ENCODE measurements at regions of chr6 and their contacts with region 1.

Region 1: DNA sequence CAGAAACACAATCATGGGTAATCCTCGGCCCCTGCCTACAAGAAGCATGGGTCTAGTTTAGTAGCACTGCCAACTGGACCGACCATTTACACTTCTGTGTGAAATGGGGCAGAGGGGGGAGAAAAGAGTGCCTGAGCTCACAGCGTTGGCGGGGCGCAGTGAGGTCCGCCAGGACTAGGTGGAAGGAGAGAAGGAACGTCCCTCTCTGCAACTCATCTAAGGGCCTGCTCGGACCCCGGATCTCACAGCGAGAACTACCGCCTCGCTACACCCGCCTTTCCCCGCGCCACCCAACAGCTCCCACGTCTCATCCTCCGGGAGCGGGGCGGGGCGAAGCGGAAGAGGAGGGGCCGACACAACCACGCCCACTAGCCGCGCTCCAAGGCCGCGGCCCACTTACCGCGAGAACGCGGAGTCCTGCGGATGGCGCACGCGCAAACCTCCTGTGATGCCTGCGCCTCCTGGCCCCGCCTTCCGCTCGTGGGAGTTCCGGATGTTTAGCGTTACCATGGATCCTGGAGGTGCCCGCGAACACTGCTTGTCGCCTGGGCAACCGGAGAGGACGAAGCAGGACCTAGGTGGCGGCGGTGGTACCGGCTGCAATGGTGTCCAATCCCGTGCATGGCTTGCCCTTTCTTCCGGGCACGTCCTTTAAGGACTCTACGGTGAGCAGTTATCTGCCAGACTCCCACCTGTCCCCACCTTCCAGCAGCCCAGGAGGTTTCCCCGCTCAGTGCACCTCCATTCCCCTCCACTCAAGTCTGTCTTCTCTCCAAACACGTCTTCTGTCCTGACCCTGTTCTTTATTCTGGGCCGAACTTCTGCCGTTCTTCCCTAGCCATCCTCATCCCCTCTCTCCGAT is at the start of gene EFHC1:
- DNase-seq: peak; percentile 97
- H3K4me3 Mint-ChIP-seq: no peak within 1 kb of the TSS
- H3K27ac Mint-ChIP-seq: no peak within 1 kb of the TSS
- H3K4me1 Mint-ChIP-seq: peaks cover 20% of the 10 kb centered on the region
- H3K27me3 Mint-ChIP-seq: peaks cover 5% of the 10 kb centered on the region
- total RNA-seq, gene EFHC1: 0.67 and 1.6 TPM in 2 replicates

Region 2: GRCh38 chr6:52389264-52389625 is 30.8 kb before region 1 on chr6:
- intact Hi-C with region 1: no loop called
- DNase-seq: no peak
- H3K4me3 Mint-ChIP-seq: peak overlapping the region; percentile 59
- H3K27ac Mint-ChIP-seq: peak overlapping the region; percentile 84
- H3K4me1 Mint-ChIP-seq: peaks cover 75% of the 10 kb centered on the region
- H3K27me3 Mint-ChIP-seq: no peaks in the 10 kb centered on the region

Region 3: DNA sequence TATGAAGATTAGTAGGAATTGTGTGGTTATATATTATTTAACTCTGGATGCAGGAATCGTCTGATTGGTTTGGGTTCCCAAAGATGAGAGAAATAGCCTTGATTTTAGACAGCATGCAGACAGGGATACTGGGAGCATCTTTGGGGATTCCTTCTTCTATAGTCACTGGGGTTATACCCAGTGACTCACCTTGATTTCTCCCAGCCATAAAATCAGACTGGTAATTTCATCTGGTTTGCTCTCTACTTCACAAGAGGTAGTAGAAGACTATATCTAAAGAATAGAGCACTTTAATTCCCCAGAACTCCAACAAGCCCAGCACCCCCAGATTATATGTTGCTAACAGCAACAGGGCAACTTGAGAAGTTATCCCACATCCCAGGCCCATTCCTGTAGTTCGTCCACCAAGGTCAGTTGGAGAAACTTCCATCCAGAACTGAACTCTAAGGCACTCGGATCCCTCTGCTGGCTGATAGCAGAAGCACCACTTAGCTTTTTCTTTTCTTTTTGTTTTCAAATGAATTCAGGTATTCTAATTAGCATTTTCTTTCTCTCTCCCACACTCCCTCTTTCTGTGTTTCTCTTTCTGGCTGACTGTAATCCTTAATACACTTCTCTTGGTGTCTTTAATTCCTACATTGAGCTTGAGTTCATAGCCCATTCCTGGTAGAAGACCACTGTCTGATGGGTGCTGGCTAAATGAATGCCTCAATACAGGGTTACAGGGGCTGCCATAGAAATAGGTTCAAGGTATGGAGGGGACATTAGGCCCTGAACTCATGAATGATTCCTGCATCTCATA is 20.3 kb before region 1 on chr6:
- intact Hi-C with region 1: loop called (anchors 2 kb)
- DNase-seq: no peak
- H3K4me3 Mint-ChIP-seq: no peak overlapping the region
- H3K27ac Mint-ChIP-seq: peak overlapping the region; percentile 44
- H3K4me1 Mint-ChIP-seq: peaks cover 47% of the 10 kb centered on the region
- H3K27me3 Mint-ChIP-seq: no peaks in the 10 kb centered on the region

Region 4: GRCh38 chr6:52537001-52537753 is 117.1 kb after region 1 on chr6:
- intact Hi-C with region 1: loop called (anchors 2 kb)
- DNase-seq: peak; percentile 18
- H3K4me3 Mint-ChIP-seq: no peak overlapping the region
- H3K27ac Mint-ChIP-seq: peak overlapping the region; percentile 19
- H3K4me1 Mint-ChIP-seq: peaks cover 51% of the 10 kb centered on the region
- H3K27me3 Mint-ChIP-seq: no peaks in the 10 kb centered on the region

Region 5: DNA sequence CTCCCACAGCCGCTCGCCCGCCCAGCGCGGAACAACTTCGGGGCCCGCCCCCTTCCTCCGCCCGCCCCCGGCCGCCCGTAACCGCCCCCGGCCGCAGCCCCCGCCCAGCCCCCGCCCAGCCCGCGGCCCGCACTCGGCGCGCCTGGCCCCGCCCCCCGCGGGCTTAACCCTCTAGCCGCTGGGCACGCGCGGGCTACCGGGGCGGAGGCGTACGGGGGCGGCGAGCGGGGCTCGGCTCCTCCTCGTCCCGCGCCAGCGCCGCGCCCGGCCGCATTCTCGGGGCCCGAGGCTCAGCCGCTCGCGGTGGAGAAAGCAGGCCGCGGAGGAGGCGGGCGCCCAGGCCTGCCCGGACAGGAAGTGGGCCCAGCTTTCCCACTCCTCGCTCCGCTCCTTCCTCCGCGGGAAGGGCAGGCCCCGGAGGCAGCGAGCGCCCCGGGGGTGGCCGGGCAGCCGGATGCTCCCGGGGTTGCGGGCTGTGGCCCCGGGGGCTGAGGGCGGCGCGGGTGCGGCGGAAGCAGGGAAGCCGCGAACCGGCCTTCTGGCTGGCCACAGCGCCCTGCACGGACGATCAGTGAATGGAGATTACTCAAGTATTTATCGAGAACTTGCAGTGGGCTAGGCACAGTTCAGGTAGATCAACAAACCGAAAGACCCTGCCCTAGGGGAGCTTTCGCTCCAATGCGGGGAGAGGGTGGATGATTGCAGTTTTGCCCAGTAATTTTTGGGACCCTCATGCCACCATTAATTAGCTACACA is 157.2 kb after region 1 on chr6 and contains the start of gene TRAM2:
- intact Hi-C with region 1: loop called (anchors 1 kb)
- DNase-seq: peak; percentile 70
- H3K4me3 Mint-ChIP-seq: peak within 1 kb of the TSS; percentile 85
- H3K27ac Mint-ChIP-seq: peak within 1 kb of the TSS; percentile 77
- H3K4me1 Mint-ChIP-seq: peaks cover 37% of the 10 kb centered on the region
- H3K27me3 Mint-ChIP-seq: peaks cover 2% of the 10 kb centered on the region
- total RNA-seq, gene TRAM2: 4.7 TPM in 2 replicates

Region 6: DNA sequence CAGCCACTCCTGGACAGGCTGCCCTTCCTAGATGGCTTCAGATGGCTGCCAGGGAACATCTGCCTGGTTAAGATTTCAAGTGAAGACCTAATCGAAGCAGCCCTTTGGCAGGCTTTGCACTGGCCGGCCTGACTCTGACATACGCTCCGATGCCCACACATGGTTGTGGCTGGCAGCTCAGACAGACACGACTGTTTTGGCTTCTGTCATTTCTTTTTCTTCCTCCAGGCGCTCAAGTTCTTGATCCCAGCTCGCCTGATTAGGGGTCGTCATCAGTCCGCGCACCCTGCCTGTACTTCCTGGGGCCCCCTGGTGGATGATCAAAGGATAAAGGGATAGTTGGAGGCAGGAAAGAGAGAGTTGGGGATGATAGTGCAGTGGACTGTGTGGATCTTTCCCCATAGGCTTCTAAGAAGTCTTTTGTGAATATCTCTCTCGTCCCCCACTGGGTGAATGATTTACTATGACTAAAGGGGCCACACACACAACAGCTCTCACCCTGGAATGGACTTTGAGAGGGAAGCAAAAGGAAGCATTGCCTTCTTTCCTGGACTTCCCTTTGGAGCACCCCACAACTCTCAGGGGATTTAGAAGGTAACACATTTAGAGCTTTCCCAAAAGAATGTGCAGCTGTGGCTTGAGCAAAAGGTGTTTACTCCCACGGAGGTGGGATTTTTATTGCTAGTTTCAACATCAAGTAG is 178.2 kb after region 1 on chr6:
- intact Hi-C with region 1: loop called (anchors 2 kb)
- DNase-seq: no peak
- H3K4me3 Mint-ChIP-seq: no peak overlapping the region
- H3K27ac Mint-ChIP-seq: no peak overlapping the region
- H3K4me1 Mint-ChIP-seq: peaks cover 27% of the 10 kb centered on the region
- H3K27me3 Mint-ChIP-seq: peaks cover 2% of the 10 kb centered on the region

Region 7: GRCh38 chr6:52664186-52664990 is 244.3 kb after region 1 on chr6:
- intact Hi-C with region 1: loop called (anchors 1 kb)
- DNase-seq: peak; percentile 78
- H3K4me3 Mint-ChIP-seq: no peak overlapping the region
- H3K27ac Mint-ChIP-seq: no peak overlapping the region
- H3K4me1 Mint-ChIP-seq: peaks cover 16% of the 10 kb centered on the region
- H3K27me3 Mint-ChIP-seq: no peaks in the 10 kb centered on the region

Region 8: GRCh38 chr6:53064726-53065215 is 644.7 kb after region 1 on chr6:
- intact Hi-C with region 1: loop called (anchors 1 kb)
- DNase-seq: peak; percentile 92
- H3K4me3 Mint-ChIP-seq: peak overlapping the region; percentile 99
- H3K27ac Mint-ChIP-seq: peak overlapping the region; percentile 99
- H3K4me1 Mint-ChIP-seq: peaks cover 49% of the 10 kb centered on the region
- H3K27me3 Mint-ChIP-seq: no peaks in the 10 kb centered on the region